ENCODE measurements at regions of chrX and their contacts with region 1.

Region 1: GRCh38 chrX:147675819-147676218 is 235.9 kb upstream of the FMR1 start:
- DNase-seq: no peak
- H3K4me3 ChIP-seq: no peak overlapping the region
- H3K27ac ChIP-seq: no peak overlapping the region
- H3K4me1 ChIP-seq: no peaks in the 10 kb centered on the region
- CTCF ChIP-seq: no peak

Region 2: GRCh38 chrX:147570483-147570882 is 105.3 kb before region 1 on chrX:
- CTCF ChIA-PET with region 1: no interaction called
- POLR2A ChIA-PET with region 1: no interaction called
- intact Hi-C with region 1: no loop called
- DNase-seq: no peak
- H3K4me3 ChIP-seq: no peak overlapping the region
- H3K27ac ChIP-seq: no peak overlapping the region
- H3K4me1 ChIP-seq: no peaks in the 10 kb centered on the region
- CTCF ChIP-seq: 0 out of 2 replicates have a peak, but pooled peaks have one; percentile 18

Region 3: GRCh38 chrX:147646949-147647723 is 28.7 kb before region 1 on chrX:
- CTCF ChIA-PET with region 1: no interaction called
- POLR2A ChIA-PET with region 1: no interaction called
- intact Hi-C with region 1: loop called (anchors 2 kb)
- DNase-seq: no peak
- H3K4me3 ChIP-seq: no peak overlapping the region
- H3K27ac ChIP-seq: no peak overlapping the region
- H3K4me1 ChIP-seq: no peaks in the 10 kb centered on the region
- CTCF ChIP-seq: no peak

Region 4: DNA sequence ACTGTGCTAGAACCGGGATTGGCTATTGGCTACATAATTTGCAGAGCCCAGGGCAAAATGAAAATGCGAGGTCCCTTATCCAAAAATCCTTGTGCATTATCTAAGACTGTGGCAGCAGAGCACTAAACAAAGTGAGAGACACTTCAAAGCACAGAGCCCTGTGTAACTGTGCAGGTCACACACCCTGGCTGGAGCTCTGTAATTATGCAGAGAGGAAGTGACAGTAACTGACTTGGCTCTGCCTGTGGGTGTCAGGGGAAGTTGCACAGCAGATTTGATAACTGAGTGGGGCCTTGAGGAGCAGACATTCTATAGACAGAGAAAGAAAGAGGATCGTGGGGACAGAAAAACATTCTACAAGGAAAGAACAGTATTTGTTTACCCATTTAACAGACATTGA is 62.4 kb after region 1 on chrX:
- CTCF ChIA-PET with region 1: no interaction called
- POLR2A ChIA-PET with region 1: no interaction called
- intact Hi-C with region 1: no loop called
- DNase-seq: no peak
- H3K4me3 ChIP-seq: no peak overlapping the region
- H3K27ac ChIP-seq: no peak overlapping the region
- H3K4me1 ChIP-seq: no peaks in the 10 kb centered on the region
- CTCF ChIP-seq: no peak

Region 5: DNA sequence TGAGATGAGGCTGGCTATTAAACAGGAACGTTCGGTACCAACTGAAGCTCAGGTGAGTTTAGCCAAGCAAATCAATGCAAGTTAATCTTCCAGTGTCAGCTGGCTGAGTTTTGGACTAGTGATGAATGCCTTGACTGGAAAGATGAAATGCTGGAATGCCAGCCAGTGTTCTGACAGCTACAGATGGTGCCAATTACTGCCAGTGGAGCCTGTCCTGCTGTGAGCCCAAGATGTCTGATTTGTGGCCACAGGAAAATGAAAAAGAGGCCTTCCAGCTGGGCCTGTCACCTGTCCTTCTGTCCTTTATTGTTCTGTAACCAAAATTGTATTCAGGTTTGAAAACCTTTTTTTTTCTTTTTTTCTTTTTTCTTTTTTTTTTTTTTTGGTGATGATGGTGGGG is 1047.7 kb after region 1 on chrX:
- CTCF ChIA-PET with region 1: no interaction called
- POLR2A ChIA-PET with region 1: no interaction called
- intact Hi-C with region 1: no loop called
- DNase-seq: no peak
- H3K4me3 ChIP-seq: no peak overlapping the region
- H3K27ac ChIP-seq: no peak overlapping the region
- H3K4me1 ChIP-seq: no peaks in the 10 kb centered on the region
- CTCF ChIP-seq: no peak

Region 6: DNA sequence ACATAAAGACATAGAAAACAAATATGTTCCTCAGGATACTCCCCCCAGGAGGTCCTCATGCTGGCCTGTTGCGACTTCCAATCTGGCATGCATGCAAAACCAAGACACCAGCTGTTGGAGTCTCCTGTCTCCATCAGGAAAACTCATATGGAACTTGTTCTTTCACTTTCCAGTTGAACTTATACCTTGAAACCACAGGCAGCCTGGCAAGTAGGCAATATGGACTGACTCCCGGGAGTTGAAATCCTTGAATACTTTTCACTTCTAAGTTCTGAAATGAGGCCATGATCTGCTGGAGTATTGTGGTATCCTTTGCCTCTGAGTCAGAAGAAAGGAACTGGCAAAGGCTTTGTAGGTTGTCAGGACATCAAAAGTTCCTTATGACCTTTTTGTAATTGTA is 1385.1 kb after region 1 on chrX:
- CTCF ChIA-PET with region 1: no interaction called
- POLR2A ChIA-PET with region 1: no interaction called
- intact Hi-C with region 1: no loop called
- DNase-seq: no peak
- H3K4me3 ChIP-seq: no peak overlapping the region
- H3K27ac ChIP-seq: no peak overlapping the region
- H3K4me1 ChIP-seq: no peaks in the 10 kb centered on the region
- CTCF ChIP-seq: no peak

Measured in OCI-LY7 (cell line).